ENCODE measurements at regions of chr2 and their contacts with region 1.

Region 1: DNA sequence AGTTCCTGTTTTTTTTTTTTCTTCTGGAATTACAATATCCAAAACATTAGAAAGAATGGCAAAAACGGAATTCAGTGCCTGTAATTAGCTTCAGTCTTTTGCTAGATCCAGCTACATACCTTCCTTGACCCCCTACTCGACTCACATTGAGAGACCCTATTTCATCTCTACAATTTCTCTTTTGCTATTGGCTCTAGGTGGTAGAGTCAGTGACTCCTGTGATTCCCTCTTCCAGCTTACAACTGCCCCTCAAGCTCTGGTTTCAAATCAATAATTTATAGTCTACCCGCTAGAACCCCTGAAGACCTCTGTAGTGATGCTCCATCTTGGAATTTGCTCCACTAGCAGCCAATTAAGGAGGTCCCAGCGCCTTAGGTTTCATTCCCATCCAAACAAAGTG is 125.8 kb downstream of the TMEFF2 start:
- DNase-seq: no peak
- ATAC-seq: no peak
- H3K4me3 ChIP-seq: no peak overlapping the region
- H3K27ac ChIP-seq: no peak overlapping the region
- H3K4me1 ChIP-seq: no peaks in the 10 kb centered on the region
- H3K27me3 ChIP-seq: no peaks in the 10 kb centered on the region
- CTCF ChIP-seq: no peak
- POLR2A ChIP-seq: no peak
- RAD21 ChIP-seq: no peak

Region 2: DNA sequence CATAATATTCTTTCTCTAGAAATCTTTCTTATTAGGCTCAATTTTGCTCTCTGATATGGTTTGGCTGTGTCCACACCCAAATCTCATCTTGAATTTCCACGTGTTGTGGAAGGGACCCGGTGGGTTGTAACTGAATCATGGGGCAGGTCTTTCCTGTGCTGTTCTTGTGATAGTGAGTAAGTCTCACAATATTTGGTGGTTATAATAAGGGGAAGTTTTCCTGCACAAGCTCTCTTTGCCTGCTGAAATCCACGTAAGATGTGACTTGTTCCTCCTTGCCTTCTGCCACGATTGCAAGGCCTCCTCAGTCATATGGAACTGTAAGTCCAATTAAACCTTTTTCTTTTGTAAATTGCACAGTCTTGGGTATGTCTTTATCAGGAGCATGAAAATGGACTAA is 295.8 kb before region 1 on chr2:
- CTCF ChIA-PET with region 1: no interaction called
- POLR2A ChIA-PET with region 1: no interaction called
- RAD21 ChIA-PET with region 1: no interaction called
- intact Hi-C with region 1: no loop called
- DNase-seq: no peak
- ATAC-seq: no peak
- H3K4me3 ChIP-seq: no peak overlapping the region
- H3K27ac ChIP-seq: no peak overlapping the region
- H3K4me1 ChIP-seq: no peaks in the 10 kb centered on the region
- H3K27me3 ChIP-seq: no peaks in the 10 kb centered on the region
- CTCF ChIP-seq: no peak
- POLR2A ChIP-seq: no peak
- RAD21 ChIP-seq: no peak

Region 3: DNA sequence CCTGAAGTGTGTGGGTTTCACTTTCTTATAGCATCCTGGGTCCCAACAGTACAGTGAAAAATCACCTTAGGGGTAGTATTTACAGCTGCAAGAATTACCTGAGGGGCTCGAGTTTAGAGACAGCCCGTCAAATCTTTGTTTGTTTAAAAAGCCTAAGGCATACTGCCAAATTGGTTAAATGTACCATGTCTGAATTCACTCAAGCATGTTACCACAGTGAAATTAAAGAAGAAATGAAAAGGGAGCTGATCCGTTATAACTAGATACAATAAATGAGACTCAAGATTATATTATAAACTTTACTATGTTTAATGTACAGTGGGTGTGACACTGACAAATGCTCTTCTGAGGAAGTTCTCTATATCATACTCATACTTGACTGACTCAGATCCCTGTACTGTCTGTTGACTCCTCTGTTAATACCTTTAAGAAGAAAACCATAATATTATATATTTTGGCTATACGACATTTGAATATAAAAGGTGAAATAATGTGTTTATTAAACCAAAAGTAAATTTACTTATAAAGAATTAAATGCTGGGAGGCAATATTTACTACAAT is 18.5 kb after region 1 on chr2:
- CTCF ChIA-PET with region 1: no interaction called
- POLR2A ChIA-PET with region 1: no interaction called
- RAD21 ChIA-PET with region 1: no interaction called
- intact Hi-C with region 1: loop called (anchors 2 kb)
- DNase-seq: no peak
- ATAC-seq: no peak
- H3K4me3 ChIP-seq: no peak overlapping the region
- H3K27ac ChIP-seq: no peak overlapping the region
- H3K4me1 ChIP-seq: no peaks in the 10 kb centered on the region
- H3K27me3 ChIP-seq: no peaks in the 10 kb centered on the region
- CTCF ChIP-seq: no peak
- POLR2A ChIP-seq: no peak
- RAD21 ChIP-seq: no peak

Region 4: DNA sequence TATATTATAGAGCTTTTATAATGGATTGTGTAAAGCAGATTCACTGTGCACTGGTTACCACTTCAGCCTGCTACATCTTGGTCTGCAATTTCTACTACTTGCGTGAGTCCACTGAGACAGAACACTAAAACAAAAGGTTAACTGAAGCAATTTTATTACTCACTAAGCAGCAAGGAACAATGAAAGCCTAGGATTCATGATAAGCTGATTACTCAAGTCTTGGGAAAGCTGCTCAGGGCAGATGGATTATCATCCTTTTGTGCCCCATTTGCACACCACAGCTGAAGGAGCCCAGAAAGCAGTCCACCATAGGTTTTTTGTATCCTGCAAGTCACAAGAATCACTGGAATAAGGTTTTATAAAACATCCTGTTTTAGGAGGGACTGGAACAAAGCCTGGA is 1341.0 kb after region 1 on chr2:
- CTCF ChIA-PET with region 1: no interaction called
- POLR2A ChIA-PET with region 1: no interaction called
- RAD21 ChIA-PET with region 1: no interaction called
- intact Hi-C with region 1: no loop called
- DNase-seq: no peak
- ATAC-seq: no peak
- H3K4me3 ChIP-seq: no peak overlapping the region
- H3K27ac ChIP-seq: no peak overlapping the region
- H3K4me1 ChIP-seq: no peaks in the 10 kb centered on the region
- H3K27me3 ChIP-seq: no peaks in the 10 kb centered on the region
- CTCF ChIP-seq: no peak
- POLR2A ChIP-seq: no peak
- RAD21 ChIP-seq: no peak

Measured in HCT116 (cell line).